Left lung (tissue), 14 donors: ENCODE measurements at regions of chr9 and their contacts with region 1.

Region 1: GRCh38 chr9:14107977-14108376 is 206.0 kb downstream of the NFIB start:
- DNase-seq: no peak
- ATAC-seq: peak; percentile 37
- H3K4me3 ChIP-seq: no peak overlapping the region
- H3K27ac ChIP-seq: no peak overlapping the region
- H3K4me1 ChIP-seq: no peaks in the 10 kb centered on the region
- H3K27me3 ChIP-seq: no peaks in the 10 kb centered on the region
- CTCF ChIP-seq: no peak

Region 2: GRCh38 chr9:14251154-14252071 is 143.4 kb after region 1 on chr9:
- intact Hi-C with region 1: no loop called
- DNase-seq: peak; percentile 63 to 87 (median 75)
- ATAC-seq: peak; percentile 88
- H3K4me3 ChIP-seq: no peak overlapping the region
- H3K27ac ChIP-seq: peak overlapping the region; percentile 35 to 46
- H3K4me1 ChIP-seq: peaks cover 11 to 12% of the 10 kb centered on the region in 2 donors
- H3K27me3 ChIP-seq: no peaks in the 10 kb centered on the region
- CTCF ChIP-seq: no peak

Region 3: DNA sequence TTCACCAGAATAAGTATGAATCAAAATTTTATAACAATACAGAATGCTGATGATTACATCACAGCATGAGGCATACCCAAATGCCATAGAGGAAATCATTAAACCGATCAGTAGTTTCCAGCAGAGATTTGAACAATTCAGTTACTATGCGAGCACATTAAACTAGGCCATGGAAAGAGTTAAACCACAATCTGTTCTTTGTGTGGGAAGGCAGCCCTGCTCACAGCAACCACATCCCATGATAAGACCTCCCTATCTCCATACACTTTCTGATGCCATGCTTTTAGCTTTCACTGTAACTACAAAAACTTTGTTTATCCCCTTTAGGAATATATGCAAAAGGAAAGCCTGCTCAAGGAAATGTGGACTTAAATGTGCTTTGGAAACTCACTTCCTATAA is 201.4 kb after region 1 on chr9:
- intact Hi-C with region 1: loop called in 1 of 2 experiments (anchors 10 kb)
- DNase-seq: no peak
- ATAC-seq: peak; percentile 5
- H3K4me3 ChIP-seq: peak overlapping the region; percentile 5 to 57
- H3K27ac ChIP-seq: peak overlapping the region; percentile 18 to 50
- H3K4me1 ChIP-seq: peaks cover 0 to 13% of the 10 kb centered on the region in 2 donors
- H3K27me3 ChIP-seq: peaks cover 0 to 37% of the 10 kb centered on the region in 2 donors
- CTCF ChIP-seq: no peak

Region 4: DNA sequence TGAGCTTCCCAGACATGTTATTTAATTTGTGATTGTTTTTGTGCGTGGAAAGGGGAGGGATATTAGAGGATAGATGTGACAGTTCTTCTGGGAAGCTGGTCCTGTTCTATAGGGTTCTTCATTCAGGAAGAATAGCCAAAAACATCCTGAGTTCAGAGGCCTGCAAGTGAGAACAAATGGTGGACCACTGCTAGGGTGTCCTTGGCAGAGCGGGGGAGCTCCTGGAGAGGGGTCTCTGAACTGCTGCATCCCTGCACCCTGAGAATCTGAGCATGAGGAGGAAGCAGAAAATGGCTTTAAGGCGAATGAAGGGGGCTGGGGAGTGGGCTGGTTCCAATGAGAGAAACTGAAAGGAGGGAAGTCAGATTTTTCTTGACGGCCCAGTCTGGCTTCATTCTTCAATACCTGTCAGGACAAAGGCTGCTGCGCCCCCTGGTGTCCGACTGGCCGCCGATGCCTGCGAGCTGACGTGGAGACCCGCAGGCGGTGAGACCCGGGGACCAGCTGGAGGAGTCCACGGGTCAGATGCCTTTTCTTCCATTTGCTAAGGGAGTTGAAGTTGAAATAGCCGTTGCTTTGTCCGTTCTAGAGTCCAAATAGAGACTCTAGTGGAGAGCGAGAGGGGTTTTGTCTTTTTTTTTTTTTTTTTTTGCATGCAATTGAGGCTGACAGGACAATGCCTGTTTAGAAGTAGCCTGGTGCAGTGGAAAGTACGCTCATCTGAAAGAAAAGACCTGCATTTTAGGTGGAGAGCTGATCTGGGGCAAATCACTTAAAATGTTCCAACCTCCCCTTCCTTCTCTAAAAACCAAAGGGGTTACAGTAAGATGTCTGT is 245.5 kb after region 1 on chr9:
- intact Hi-C with region 1: no loop called
- DNase-seq: peak; percentile 87 to 96 (median 92)
- ATAC-seq: peak; percentile 89
- H3K4me3 ChIP-seq: no peak overlapping the region
- H3K27ac ChIP-seq: peak overlapping the region; percentile 33 to 77
- H3K4me1 ChIP-seq: peaks cover 10 to 26% of the 10 kb centered on the region in 2 donors
- H3K27me3 ChIP-seq: peaks cover 13 to 37% of the 10 kb centered on the region in 2 donors
- CTCF ChIP-seq: peak; percentile 76 to 87